MCF 10A (cell line): ENCODE measurements at regions of chr5 and their contacts with region 1.

Region 1: DNA sequence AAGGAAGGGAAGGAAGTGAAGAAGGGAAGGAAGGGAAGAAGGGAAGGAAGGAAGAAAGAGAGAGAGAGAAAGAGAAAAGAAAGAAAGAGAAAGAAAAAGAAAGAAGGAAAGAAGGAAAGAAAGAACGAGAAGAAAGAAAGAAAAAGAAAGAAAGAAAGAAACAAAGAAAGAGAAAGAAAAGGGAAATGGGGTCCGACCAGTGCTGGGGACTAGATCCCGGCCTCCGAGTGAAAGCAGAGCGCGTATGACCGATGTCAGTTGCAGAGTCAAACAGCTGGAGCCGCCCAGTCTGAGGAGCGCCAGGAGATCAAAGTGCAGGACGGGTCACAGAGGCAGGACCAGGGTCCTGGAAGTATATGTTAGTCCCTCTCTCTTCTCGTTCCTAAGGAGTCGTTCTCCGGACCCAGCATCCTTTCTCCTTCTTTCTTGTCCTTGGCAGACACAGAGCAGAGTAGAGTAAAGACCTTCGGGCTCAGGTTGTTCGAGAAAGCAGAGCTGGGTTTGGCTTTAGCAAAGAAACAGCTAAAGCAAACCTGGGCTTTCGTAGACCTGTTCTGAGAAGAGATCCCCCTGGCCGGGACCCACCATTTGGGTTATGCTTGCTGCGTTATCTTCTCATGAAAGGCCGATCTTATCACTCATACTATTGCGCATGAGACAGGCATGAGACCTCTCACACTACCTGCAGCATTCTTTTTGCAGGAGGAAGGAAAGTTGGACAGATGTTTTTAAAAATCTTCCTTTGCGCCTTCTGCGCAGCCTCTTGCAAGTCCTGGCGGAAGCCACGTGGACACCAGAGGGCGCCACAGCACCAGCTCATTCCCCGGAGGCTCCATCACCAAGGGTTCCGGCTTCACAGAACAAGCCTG is 305.2 kb upstream of the MSX2 start:
- DNase-seq: peak; percentile 87
- H3K4me3 Mint-ChIP-seq: peak overlapping the region; percentile 43
- H3K27ac Mint-ChIP-seq: no peak overlapping the region
- H3K4me1 Mint-ChIP-seq: peaks cover 13% of the 10 kb centered on the region
- H3K27me3 Mint-ChIP-seq: peaks cover 12% of the 10 kb centered on the region
- CTCF ChIP-seq: peak; percentile 93

Region 2: GRCh38 chr5:174310243-174310642 is 108.9 kb before region 1 on chr5:
- CTCF ChIA-PET with region 1: no interaction called
- POLR2A ChIA-PET with region 1: no interaction called
- intact Hi-C with region 1: no loop called
- DNase-seq: no peak
- H3K4me3 Mint-ChIP-seq: no peak overlapping the region
- H3K27ac Mint-ChIP-seq: no peak overlapping the region
- H3K4me1 Mint-ChIP-seq: no peaks in the 10 kb centered on the region
- H3K27me3 Mint-ChIP-seq: peaks cover 50% of the 10 kb centered on the region
- CTCF ChIP-seq: no peak

Region 3: DNA sequence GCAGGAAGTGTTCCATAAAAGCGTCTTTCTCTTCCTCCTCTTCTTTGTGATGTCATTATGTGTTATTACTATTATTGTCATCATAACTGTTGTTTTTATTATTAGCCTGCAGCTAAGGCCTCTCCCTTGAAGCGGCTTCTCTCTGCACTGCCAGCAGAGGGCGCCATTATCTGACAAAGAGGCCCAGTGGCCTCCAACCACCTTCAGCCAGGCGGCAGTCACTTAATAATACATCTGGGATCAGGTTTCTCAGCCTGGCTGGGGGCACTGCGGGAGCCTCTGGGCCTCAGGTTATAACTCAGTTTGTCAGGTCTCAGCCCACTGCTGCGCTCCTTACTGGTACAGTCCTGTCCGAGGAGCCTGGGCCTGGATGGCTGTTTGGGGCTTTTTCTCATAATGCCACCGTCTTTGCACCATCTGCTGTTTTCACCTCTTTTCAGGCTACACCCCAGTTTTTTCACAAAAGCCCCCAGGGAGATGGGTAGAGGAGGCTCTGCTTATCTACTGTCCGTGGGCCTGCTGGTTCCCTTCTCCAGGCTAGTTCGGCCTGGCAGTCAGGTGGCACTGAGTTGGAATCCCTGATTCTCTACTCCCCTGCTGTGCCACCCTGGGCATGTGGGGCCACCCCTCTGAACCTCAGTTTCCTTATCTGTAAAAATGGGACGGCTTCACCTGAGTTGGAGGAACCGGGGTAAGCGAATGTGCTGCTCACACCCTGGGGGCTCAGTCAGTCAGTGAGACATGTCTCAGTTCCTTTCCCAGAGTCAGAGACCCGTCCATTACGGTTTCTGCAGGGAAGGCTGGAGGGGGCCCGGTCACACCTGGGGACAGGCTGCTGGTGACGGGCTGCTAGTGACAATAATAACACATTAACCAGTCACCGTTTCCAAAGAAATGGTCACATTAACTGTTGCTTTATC is 91.6 kb before region 1 on chr5:
- CTCF ChIA-PET with region 1: interaction called, 27 read pairs
- POLR2A ChIA-PET with region 1: interaction called, 4 read pairs
- intact Hi-C with region 1: loop called (anchors 1 kb)
- DNase-seq: peak; percentile 88
- H3K4me3 Mint-ChIP-seq: no peak overlapping the region
- H3K27ac Mint-ChIP-seq: peak overlapping the region; percentile 96
- H3K4me1 Mint-ChIP-seq: peaks cover 25% of the 10 kb centered on the region
- H3K27me3 Mint-ChIP-seq: peaks cover 25% of the 10 kb centered on the region
- CTCF ChIP-seq: peak; percentile 98

Region 4: DNA sequence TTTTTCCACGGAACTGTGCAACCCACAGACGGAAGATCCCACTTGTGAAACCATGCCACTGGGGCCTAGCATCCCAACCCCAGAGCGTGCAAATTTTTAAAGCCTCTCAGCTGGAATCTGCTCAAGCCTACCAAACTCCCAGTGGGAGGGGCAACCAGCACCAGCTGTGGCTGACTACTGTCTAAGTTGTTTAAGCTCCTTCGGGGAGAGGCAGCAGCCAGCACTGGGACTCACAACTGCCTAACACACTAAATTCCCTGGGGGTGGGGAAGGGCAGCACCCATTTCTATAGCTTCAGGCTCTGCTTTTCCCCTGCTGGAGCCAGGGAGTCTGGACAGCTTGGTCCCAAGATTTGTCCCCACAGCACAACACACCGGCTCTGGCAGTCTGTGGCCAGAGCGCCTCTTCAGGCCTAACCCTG is 17.6 kb after region 1 on chr5:
- CTCF ChIA-PET with region 1: interaction called, 45 read pairs
- POLR2A ChIA-PET with region 1: interaction called, 3 read pairs
- intact Hi-C with region 1: no loop called
- DNase-seq: no peak
- H3K4me3 Mint-ChIP-seq: no peak overlapping the region
- H3K27ac Mint-ChIP-seq: no peak overlapping the region
- H3K4me1 Mint-ChIP-seq: no peaks in the 10 kb centered on the region
- H3K27me3 Mint-ChIP-seq: peaks cover 27% of the 10 kb centered on the region
- CTCF ChIP-seq: no peak

Region 5: GRCh38 chr5:174545926-174546325 is 126.8 kb after region 1 on chr5:
- CTCF ChIA-PET with region 1: no interaction called
- POLR2A ChIA-PET with region 1: no interaction called
- intact Hi-C with region 1: no loop called
- DNase-seq: no peak
- H3K4me3 Mint-ChIP-seq: no peak overlapping the region
- H3K27ac Mint-ChIP-seq: no peak overlapping the region
- H3K4me1 Mint-ChIP-seq: no peaks in the 10 kb centered on the region
- H3K27me3 Mint-ChIP-seq: no peaks in the 10 kb centered on the region
- CTCF ChIP-seq: no peak

Region 6: DNA sequence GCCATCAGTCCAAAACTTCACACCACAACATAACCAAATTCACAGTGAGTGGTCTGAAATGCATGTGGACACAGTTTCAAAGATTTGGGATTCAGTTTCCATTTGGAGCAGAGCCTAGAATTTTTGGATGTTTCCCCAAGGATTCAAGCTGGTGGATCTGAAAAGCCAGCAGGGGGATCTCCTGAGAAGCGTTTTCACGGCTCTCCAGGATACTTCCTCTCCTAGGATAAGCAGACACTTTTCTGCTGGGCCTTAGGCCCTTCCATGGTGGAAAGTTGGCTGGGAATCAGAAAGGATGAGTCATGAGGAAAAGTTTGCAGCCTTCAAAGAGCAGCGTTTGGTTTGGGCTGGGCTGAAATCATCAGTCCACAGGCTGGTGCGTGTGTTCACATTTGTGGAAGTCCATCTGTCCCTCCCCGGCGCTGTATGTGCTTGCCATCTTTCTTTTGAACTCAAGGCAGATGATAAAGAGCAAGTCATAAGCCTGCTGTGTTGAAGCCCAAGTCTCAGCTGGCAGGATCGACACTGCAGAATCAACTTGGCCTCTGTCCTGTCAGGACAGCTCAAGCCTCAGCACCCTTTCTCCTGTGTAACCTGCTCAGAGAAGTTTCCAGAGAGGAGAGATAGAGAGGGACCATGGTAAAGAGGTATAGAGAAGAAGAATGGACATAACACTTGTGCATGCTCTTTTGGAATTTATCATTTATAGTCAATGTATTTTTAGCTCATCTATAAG is 152.7 kb after region 1 on chr5:
- CTCF ChIA-PET with region 1: interaction called, 28 read pairs
- POLR2A ChIA-PET with region 1: no interaction called
- intact Hi-C with region 1: loop called (anchors 1 kb)
- DNase-seq: peak; percentile 99
- H3K4me3 Mint-ChIP-seq: no peak overlapping the region
- H3K27ac Mint-ChIP-seq: no peak overlapping the region
- H3K4me1 Mint-ChIP-seq: peaks cover 21% of the 10 kb centered on the region
- H3K27me3 Mint-ChIP-seq: no peaks in the 10 kb centered on the region
- CTCF ChIP-seq: peak; percentile 22

Region 7: DNA sequence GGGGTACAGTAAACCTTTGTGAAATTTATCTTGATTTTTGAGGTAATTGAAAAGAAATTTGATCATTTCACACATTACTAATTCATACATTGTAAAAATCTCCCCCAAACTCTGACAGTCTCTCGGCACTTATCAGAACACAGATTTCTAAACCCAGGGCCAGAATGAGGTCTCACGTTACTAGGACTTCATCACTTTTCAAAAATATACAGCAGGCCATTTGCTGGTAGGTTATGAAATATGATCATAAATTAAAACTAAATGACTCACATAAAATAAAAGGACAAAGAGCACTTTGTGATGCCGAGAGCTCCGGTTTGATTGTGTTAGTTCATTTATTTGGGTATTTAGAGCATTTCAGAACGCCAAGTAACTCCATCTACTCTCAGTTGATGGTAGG is 322.2 kb after region 1 on chr5:
- CTCF ChIA-PET with region 1: interaction called, 34 read pairs
- POLR2A ChIA-PET with region 1: interaction called, 3 read pairs
- intact Hi-C with region 1: loop called (anchors 1 kb)
- DNase-seq: peak; percentile 14
- H3K4me3 Mint-ChIP-seq: no peak overlapping the region
- H3K27ac Mint-ChIP-seq: no peak overlapping the region
- H3K4me1 Mint-ChIP-seq: peaks cover 7% of the 10 kb centered on the region
- H3K27me3 Mint-ChIP-seq: peaks cover 12% of the 10 kb centered on the region
- CTCF ChIP-seq: no peak

Region 8: GRCh38 chr5:174785120-174785680 is 366.0 kb after region 1 on chr5:
- CTCF ChIA-PET with region 1: interaction called, 326 read pairs
- POLR2A ChIA-PET with region 1: no interaction called
- intact Hi-C with region 1: no loop called
- DNase-seq: no peak
- H3K4me3 Mint-ChIP-seq: no peak overlapping the region
- H3K27ac Mint-ChIP-seq: no peak overlapping the region
- H3K4me1 Mint-ChIP-seq: no peaks in the 10 kb centered on the region
- H3K27me3 Mint-ChIP-seq: no peaks in the 10 kb centered on the region
- CTCF ChIP-seq: no peak

Region 9: GRCh38 chr5:175096469-175097165 is 677.5 kb after region 1 on chr5:
- CTCF ChIA-PET with region 1: no interaction called
- POLR2A ChIA-PET with region 1: no interaction called
- intact Hi-C with region 1: no loop called
- DNase-seq: peak; percentile 9
- H3K4me3 Mint-ChIP-seq: no peak overlapping the region
- H3K27ac Mint-ChIP-seq: no peak overlapping the region
- H3K4me1 Mint-ChIP-seq: no peaks in the 10 kb centered on the region
- H3K27me3 Mint-ChIP-seq: no peaks in the 10 kb centered on the region
- CTCF ChIP-seq: no peak